Activated CD4-positive, alpha-beta memory T cell treated with anti-CD3 and anti-CD28 coated beads for 36 hours (primary cell): ENCODE measurements at regions of chr7 and their contacts with region 1.

Region 1: DNA sequence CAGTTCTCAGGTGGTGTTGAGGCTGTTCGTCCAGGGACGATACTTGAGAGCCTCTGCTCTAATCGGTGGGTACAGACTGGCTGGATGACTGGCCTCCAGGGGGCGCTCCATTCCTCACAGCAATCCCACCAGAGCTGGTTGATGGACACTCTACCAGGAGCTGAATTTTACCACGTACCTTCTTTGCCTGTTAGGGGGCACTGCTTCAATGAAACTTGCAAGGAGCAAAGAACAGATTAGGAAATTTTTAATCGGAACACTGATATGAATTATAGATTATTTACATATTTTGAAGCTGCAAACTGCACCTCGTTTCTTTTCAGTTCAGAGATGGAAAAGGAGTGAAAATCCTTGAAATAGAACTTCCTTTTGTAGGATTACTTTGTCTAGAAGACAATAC is 44.9 kb downstream of the KBTBD2 start:
- DNase-seq: peak; percentile 94
- H3K4me3 Mint-ChIP-seq: no peak overlapping the region
- H3K27ac Mint-ChIP-seq: no peak overlapping the region
- H3K4me1 Mint-ChIP-seq: peaks cover 7% of the 10 kb centered on the region
- H3K27me3 Mint-ChIP-seq: peaks cover 24% of the 10 kb centered on the region

Region 2: GRCh38 chr7:32871624-32872371 is 25.1 kb after region 1 on chr7:
- CTCF ChIA-PET with region 1: interaction called, 41 read pairs
- POLR2A ChIA-PET with region 1: no interaction called
- intact Hi-C with region 1: no loop called
- DNase-seq: no peak
- H3K4me3 Mint-ChIP-seq: no peak overlapping the region
- H3K27ac Mint-ChIP-seq: no peak overlapping the region
- H3K4me1 Mint-ChIP-seq: peaks cover 31% of the 10 kb centered on the region
- H3K27me3 Mint-ChIP-seq: no peaks in the 10 kb centered on the region

Region 3: GRCh38 chr7:32891800-32892520 is 45.3 kb after region 1 on chr7:
- CTCF ChIA-PET with region 1: interaction called, 55 read pairs
- POLR2A ChIA-PET with region 1: no interaction called
- intact Hi-C with region 1: loop called (anchors 1 kb)
- DNase-seq: peak; percentile 99
- H3K4me3 Mint-ChIP-seq: peak overlapping the region; percentile 91
- H3K27ac Mint-ChIP-seq: peak overlapping the region; percentile 100
- H3K4me1 Mint-ChIP-seq: peaks cover 51% of the 10 kb centered on the region
- H3K27me3 Mint-ChIP-seq: no peaks in the 10 kb centered on the region

Region 4: GRCh38 chr7:32937344-32938174 is 90.9 kb after region 1 on chr7:
- CTCF ChIA-PET with region 1: interaction called, 92 read pairs
- POLR2A ChIA-PET with region 1: interaction called, 3 read pairs
- intact Hi-C with region 1: no loop called
- DNase-seq: peak; percentile 14
- H3K4me3 Mint-ChIP-seq: no peak overlapping the region
- H3K27ac Mint-ChIP-seq: no peak overlapping the region
- H3K4me1 Mint-ChIP-seq: peaks cover 10% of the 10 kb centered on the region
- H3K27me3 Mint-ChIP-seq: no peaks in the 10 kb centered on the region

Region 5: DNA sequence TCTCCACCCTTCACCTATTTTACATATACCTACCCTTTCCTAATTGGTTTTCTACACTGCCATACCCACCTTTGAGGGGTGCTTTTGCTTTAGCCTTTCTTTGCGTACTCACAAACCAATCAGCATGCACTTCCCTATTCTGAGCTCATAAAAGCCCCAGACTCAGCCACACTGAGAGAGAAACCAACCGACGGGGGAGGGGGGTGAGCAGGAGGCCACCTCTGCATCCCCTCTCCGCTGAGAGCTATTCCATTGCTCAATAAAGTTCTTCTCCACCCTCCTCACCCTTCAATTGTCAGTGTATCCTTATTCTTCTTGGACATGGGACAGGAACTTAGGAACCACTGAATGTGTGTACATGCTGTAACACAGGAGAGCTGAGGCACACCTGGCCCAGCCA is 101.5 kb after region 1 on chr7:
- CTCF ChIA-PET with region 1: interaction called, 92 read pairs
- POLR2A ChIA-PET with region 1: no interaction called
- intact Hi-C with region 1: loop called (anchors 1 kb)
- DNase-seq: no peak
- H3K4me3 Mint-ChIP-seq: no peak overlapping the region
- H3K27ac Mint-ChIP-seq: no peak overlapping the region
- H3K4me1 Mint-ChIP-seq: no peaks in the 10 kb centered on the region
- H3K27me3 Mint-ChIP-seq: peaks cover 6% of the 10 kb centered on the region

Region 6: GRCh38 chr7:33050535-33051318 is 204.0 kb after region 1 on chr7:
- CTCF ChIA-PET with region 1: interaction called, 19 read pairs
- POLR2A ChIA-PET with region 1: no interaction called
- intact Hi-C with region 1: loop called (anchors 2 kb)
- DNase-seq: no peak
- H3K4me3 Mint-ChIP-seq: no peak overlapping the region
- H3K27ac Mint-ChIP-seq: no peak overlapping the region
- H3K4me1 Mint-ChIP-seq: peaks cover 44% of the 10 kb centered on the region
- H3K27me3 Mint-ChIP-seq: no peaks in the 10 kb centered on the region